ENCODE measurements at regions of chr14 and their contacts with region 1.

Region 1: DNA sequence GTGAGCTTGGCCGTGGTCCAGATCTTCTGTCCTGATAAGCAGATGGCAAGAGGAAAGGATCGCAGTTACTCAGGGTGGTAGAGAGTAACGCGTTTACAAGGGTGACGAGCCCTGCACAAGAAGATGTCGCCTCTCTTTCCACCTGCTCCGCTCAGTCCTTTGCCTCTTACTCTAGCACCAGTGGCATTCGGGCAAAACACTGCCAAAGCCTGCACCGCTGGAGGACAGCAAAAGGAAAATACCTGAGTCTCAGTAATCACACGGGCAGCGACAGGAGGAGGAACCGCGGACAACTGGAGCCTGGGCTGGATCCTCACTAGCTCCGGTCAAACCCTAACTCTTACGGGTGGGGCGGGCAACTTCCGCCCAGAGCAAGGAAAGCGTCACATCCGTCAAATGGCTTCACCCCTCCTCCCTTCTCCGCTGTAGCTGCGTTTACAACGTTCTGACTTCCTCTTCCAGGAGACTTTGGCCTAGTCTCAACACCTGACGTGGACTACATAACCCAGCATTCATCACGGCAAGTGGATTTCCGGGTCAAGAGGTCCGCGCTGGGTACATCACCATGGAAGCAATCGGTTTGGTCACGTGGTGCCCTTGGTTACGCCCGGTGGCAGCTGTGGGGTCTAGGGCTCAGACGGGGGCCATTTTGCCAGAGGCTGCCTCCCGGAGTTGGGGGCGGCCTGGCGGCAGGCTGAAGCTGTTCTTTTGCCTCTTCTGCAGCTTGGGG is at the starts of genes KLHL28 and TOGARAM1:
- DNase-seq: peak; percentile 99
- H3K4me3 ChIP-seq: peak within 1 kb of the TSS; percentile 76 to 79
- H3K27ac ChIP-seq: peak within 1 kb of the TSS; percentile 80 to 83
- H3K4me1 ChIP-seq: peaks cover 0 to 70% (median 31%) of the 10 kb centered on the region in 4 donors
- H3K27me3 ChIP-seq: no peaks in the 10 kb centered on the region
- CTCF ChIP-seq: no peak

Region 2: DNA sequence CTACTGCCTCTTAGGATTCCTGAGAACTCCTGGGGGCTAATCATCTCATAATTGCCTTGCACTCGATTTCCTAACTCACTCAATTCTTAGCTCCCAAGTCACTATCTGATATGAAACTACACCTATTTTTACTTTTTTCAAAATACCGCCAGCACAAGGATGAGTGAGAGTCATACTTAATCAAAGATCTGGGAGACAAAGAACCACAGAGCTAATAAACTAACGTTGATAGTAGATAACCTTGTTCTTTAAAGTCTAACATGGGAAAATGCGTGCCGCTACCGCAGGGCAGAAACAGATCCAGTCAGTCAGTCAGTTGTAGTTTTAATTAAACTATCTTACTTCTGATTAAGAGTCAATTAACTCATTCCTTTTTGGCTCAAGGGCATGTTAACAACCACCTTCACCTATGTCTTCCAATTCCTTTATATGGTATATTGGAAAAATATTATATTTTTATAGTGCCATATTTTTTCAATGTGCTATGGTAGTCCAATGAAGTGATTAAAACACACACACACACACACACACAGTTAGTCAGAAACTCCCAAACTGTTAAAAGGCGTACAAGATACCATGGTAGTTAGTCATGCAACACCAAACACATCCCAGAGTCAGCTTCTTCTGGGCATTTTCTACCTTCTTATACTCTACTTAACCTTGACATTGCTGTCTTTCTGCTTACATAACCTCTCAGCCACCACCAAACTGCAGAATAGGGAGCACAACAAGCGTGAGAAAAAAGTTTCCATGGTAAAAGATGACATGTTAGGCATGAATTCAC is 114.1 kb before region 1 on chr14:
- intact Hi-C with region 1: no loop called
- DNase-seq: no peak
- H3K4me3 ChIP-seq: no peak overlapping the region
- H3K27ac ChIP-seq: no peak overlapping the region
- H3K4me1 ChIP-seq: no peaks in the 10 kb centered on the region
- H3K27me3 ChIP-seq: no peaks in the 10 kb centered on the region
- CTCF ChIP-seq: no peak

Region 3: DNA sequence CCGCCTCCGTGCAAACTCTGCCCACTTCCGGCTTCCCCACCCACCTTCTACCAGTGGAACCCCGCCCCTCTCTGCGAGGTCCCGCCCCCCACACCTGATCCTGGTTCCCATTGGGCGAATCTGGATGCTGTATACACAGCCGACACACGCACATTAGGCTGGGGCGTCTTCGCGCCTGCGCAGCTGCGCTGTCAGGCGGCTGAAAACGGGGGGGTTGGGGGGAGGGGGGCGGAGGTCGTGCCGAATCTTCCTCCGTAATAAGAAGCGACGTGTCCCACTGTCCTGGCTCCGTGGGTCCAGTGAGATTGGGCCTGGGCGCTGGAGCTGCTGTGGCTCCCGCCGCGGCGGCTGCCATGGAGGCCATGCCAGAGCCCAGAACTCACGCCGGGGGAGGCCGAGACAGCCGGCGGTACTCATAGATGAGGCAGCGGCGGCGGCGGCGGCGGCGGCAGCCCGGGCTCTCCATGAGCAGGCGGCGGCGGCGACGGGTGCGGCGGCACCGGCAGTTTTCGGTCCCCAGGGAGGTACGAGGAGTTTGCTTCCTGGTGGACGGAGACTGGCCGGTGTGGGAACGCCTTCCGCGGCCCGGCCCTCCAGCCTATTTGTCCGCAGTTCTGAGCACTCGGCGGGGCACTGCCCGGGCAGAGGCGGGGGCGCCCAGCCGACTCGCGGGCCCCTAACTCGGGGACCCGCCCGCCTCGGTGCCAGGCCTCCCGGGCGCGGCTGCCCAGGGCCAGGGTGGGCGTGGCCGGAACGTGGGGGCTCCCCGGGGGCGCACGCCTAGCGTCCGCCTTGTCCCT is 64.5 kb before region 1 on chr14:
- intact Hi-C with region 1: loop called (anchors 5 kb)
- DNase-seq: peak; percentile 99
- H3K4me3 ChIP-seq: peak overlapping the region; percentile 76 to 77
- H3K27ac ChIP-seq: peak overlapping the region; percentile 99
- H3K4me1 ChIP-seq: peaks cover 0 to 45% (median 24%) of the 10 kb centered on the region in 4 donors
- H3K27me3 ChIP-seq: no peaks in the 10 kb centered on the region
- CTCF ChIP-seq: no peak

Region 4: GRCh38 chr14:45083971-45084722 is 122.4 kb after region 1 on chr14 and contains the start of gene PRPF39:
- intact Hi-C with region 1: loop called (anchors 5 kb)
- DNase-seq: peak; percentile 92 to 97
- H3K4me3 ChIP-seq: peak within 1 kb of the TSS; percentile 60 to 90
- H3K27ac ChIP-seq: peak within 1 kb of the TSS; percentile 79 to 86
- H3K4me1 ChIP-seq: peaks cover 0 to 46% (median 10%) of the 10 kb centered on the region in 4 donors
- H3K27me3 ChIP-seq: no peaks in the 10 kb centered on the region
- CTCF ChIP-seq: no peak